Activated CD4-positive, alpha-beta T cell treated with anti-CD3 and anti-CD28 coated beads for 36 hours (primary cell): ENCODE measurements at regions of chr1 and their contacts with region 1.

Region 1: GRCh38 chr1:220089650-220090556 is at the start of gene BPNT1:
- DNase-seq: peak; percentile 98
- ATAC-seq: peak; percentile 81
- H3K4me3 Mint-ChIP-seq: peak within 1 kb of the TSS; percentile 87
- H3K27ac Mint-ChIP-seq: peak within 1 kb of the TSS; percentile 89
- H3K4me1 Mint-ChIP-seq: peaks cover 10% of the 10 kb centered on the region
- H3K27me3 Mint-ChIP-seq: no peaks in the 10 kb centered on the region
- total RNA-seq, gene BPNT1: 24.5 to 26.9 TPM

Region 2: GRCh38 chr1:220046052-220046930 is 43.6 kb before region 1 on chr1 and contains the start of gene EPRS1:
- CTCF ChIA-PET with region 1: interaction called, 3 read pairs
- POLR2A ChIA-PET with region 1: interaction called, 3 read pairs
- intact Hi-C with region 1: loop called (anchors 1 kb)
- DNase-seq: peak; percentile 96
- ATAC-seq: peak; percentile 98
- H3K4me3 Mint-ChIP-seq: peak within 1 kb of the TSS; percentile 100
- H3K27ac Mint-ChIP-seq: peak within 1 kb of the TSS; percentile 98
- H3K4me1 Mint-ChIP-seq: peaks cover 36% of the 10 kb centered on the region
- H3K27me3 Mint-ChIP-seq: no peaks in the 10 kb centered on the region
- total RNA-seq, gene EPRS1: 229 to 301 TPM

Region 3: DNA sequence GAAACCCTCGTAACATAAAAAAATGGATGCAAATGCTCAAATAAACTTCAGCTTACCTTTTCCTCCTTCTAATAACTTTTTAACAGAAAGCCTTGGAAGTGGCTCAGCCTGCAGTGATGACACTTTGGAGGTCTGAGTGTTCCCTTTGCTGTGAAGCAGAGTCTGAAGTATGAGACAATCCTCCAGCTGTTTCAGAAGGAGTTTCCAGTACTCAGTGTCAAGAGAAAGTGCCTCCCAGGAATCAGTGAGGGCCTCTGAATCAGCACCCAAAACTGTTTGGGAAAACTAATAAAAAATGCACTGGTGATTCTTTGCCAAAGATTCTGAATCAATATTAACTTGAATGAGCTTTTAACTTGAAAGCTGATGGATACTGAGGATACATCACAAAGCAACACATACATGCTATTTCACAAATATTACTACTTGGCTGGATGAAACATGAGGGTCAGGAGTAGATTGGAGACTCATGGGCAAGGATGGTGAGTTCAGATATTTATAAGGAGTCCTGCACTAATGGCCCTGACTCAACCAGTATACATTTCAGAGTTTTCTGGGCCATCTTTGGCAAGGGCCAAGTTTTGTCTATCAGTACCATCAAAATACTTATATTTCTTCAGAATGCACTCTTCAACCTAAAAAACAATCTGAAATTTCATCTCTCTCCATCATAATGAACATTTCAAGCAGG is 81.1 kb after region 1 on chr1:
- CTCF ChIA-PET with region 1: no interaction called
- POLR2A ChIA-PET with region 1: no interaction called
- intact Hi-C with region 1: no loop called
- DNase-seq: no peak
- ATAC-seq: no peak
- H3K4me3 Mint-ChIP-seq: no peak overlapping the region
- H3K27ac Mint-ChIP-seq: no peak overlapping the region
- H3K4me1 Mint-ChIP-seq: no peaks in the 10 kb centered on the region
- H3K27me3 Mint-ChIP-seq: no peaks in the 10 kb centered on the region

Region 4: DNA sequence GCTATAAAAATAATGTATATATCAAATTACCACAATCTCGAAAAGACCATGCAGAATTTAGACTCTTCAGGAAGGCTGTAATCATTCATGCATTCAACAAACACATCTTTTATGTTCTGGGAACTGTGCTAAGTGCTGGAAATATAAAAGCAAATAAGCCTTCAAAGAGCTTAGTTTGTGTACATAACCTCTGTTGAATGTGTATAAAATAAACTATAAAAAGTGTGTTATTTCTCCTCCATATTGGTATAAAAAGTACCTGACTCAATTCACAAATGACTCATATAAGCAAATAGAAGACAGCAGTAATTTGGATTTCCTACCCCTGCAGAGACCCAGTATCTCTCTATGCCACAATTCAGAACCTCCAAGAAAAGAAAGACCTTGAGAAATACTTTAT is 145.6 kb after region 1 on chr1:
- CTCF ChIA-PET with region 1: no interaction called
- POLR2A ChIA-PET with region 1: no interaction called
- intact Hi-C with region 1: no loop called
- DNase-seq: no peak
- ATAC-seq: no peak
- H3K4me3 Mint-ChIP-seq: no peak overlapping the region
- H3K27ac Mint-ChIP-seq: no peak overlapping the region
- H3K4me1 Mint-ChIP-seq: peaks cover 18% of the 10 kb centered on the region
- H3K27me3 Mint-ChIP-seq: no peaks in the 10 kb centered on the region

Region 5: GRCh38 chr1:220473440-220473839 is 383.5 kb after region 1 on chr1:
- CTCF ChIA-PET with region 1: no interaction called
- POLR2A ChIA-PET with region 1: no interaction called
- intact Hi-C with region 1: no loop called
- DNase-seq: no peak
- ATAC-seq: no peak
- H3K4me3 Mint-ChIP-seq: no peak overlapping the region
- H3K27ac Mint-ChIP-seq: no peak overlapping the region
- H3K4me1 Mint-ChIP-seq: no peaks in the 10 kb centered on the region
- H3K27me3 Mint-ChIP-seq: peaks cover 1% of the 10 kb centered on the region